ENCODE measurements at regions of chr10 and their contacts with region 1.

Region 1: DNA sequence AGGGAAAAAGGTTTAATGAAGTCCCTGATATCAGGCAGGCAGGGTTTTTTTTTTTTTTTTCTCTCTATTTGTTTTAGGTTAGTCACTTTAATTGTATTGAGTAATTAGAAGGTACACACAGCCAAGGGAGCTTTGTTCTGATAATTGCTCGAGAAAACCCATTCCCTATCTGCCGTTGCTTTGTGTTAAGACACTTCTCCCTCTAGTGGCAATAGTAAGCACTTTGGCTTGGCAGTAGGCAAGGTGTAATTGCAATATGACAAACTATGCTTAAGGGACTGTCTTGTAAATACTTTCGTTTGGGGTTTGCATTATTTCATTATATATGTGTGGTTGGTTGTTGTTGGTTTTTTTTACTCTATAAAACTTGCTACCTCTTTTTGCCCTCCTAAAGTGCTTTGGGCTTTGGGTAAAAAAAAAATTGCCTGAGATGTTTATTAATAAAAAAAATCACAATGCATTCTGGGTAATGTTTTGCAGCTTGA is 113.4 kb downstream of the BTRC start:
- DNase-seq: peak; percentile 67
- CTCF ChIP-seq: peak; percentile 78

Region 2: DNA sequence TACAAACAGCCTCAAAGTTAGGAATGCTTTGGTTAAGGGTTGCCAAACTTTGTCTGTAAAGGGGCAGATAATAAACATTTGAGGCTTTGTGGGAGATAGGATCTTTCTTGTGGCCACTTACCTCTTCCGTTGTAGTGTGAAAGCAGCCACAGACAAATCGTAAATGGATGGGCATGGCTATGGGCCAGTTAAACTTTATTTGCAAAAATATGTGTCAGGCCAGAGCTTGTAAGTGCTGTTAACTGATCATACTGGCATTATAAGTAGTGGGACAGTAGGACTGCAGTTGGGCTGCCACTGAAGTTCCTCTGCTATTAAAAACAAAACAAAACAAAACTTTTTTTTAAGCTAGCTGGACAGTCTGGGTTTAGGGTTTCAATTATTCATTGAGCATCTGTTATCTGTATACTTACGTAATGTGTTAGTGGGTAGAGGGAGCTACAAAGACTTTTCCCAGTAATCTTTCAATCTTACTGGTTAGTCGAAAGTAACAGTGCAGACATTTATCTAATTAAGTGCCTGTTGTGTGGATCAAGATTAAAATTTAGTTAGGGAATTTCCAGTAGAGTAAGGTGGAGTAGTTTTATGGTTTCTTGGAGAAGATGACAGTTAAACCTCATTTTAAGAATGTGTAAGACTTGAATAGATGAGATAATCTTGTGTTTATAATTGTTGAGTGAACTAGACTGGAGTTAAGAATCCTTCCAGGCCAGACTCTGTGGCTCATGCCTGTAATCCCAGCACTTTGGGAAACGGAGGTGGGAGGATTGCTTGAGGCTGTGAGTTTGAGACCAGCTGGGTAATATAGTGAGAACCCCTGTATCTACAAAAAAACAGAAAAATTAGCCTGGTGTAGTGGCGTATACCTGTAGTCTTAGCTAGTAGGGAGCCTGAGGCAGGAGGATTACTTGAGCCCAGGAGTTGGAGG is 13.3 kb before region 1 on chr10:
- CTCF ChIA-PET with region 1: interaction called, 22 read pairs
- POLR2A ChIA-PET with region 1: no interaction called
- DNase-seq: no peak
- CTCF ChIP-seq: no peak

Region 3: DNA sequence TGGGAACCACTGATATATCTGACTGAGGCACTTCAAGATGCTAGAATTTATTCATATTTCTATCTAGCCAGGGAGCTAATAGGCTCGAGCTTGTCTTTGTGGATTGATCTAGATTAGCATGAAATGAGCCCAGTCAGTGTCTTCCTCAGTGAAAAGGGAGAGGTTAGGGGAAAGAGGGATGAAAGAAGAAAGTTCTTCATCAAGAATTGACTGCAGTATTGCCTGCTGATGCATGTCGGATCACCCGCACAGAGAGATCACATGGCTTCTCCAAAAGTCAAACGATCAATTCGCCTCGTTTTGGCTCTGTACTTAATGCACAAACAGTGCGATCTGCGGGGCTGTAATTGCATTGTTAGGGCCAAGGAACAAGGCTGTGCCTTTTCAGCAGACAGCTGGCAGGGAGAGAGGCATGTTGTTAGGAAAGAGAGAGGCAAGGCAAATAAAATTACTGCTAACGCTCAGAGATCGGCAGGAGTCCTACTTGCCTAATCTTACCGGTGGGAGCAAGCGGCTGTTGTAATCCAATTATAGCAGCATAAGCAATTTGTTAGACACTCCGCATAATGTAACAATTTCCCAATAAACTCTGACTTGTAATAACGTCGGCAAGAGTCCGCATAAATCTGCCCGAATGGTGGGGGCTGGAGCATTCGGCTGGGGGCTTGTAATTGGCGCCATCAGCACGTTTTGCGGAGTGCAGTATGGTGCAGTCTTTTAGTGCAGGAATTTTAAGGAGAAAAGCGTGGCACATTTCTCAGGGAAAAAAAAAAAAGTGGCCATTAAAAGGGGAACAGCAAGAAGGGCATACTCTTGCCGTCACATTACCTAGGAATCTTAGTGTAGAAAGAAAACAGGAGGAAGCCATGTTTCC is 18.6 kb after region 1 on chr10:
- CTCF ChIA-PET with region 1: interaction called, 15 read pairs
- POLR2A ChIA-PET with region 1: no interaction called
- DNase-seq: no peak
- CTCF ChIP-seq: no peak